Right ventricle myocardium inferior (tissue), 1 donor: ENCODE measurements at regions of chr9 and their contacts with region 1.

Region 1: GRCh38 chr9:3508521-3509291 is 17.1 kb downstream of the RFX3 start:
- DNase-seq: no peak
- ATAC-seq: no peak

Region 2: DNA sequence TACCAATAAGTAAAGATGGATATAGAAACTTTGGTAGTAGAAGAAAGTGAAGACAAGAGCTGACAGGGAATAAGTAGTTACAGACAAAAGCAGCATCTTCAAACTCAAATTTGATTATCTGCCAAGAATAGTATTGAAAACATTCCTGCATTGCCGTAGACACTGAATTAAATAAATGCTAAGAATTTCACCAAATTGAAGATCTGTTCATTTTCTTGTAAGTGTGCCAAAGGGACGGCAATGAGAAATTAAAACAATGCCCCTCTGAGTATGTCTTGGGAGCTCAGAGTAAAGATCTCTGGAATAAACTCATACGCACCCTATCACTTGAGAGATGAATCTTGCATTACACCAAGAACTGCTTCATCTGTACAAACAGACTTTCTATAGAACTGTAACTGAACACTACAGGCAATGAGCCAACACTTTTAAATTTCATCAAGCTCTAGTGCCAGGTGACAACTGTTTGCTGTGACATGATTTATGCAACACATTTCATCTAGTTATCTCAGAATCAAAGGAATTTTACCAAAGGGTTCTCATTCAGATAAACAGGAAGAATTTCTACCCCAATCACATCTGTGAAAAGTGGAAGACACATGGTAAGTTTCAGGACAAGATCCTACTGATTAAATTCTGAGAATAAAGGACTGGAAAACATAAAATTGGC is 49.8 kb before region 1 on chr9:
- intact Hi-C with region 1: loop called (anchors 10 kb)
- DNase-seq: no peak
- ATAC-seq: no peak

Region 3: DNA sequence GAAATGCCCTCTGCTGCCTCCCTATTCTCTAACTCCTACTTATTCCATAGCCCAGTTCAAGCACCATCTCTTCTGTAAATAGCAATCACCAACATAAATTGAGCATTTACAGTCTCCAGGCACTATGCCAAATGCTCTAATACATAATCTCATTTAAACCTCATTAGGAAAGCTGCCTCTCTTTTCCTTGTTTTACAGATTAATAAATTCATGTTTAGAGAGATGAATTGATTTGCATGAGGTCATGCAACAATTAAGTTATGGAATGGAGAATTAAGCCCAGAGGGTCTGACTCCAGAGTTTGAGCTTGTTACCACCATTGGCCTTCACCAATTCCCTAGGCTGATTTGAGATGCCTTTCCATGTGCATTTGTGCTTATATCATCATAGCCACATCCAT is 40.5 kb after region 1 on chr9:
- intact Hi-C with region 1: no loop called
- DNase-seq: no peak
- ATAC-seq: no peak

Region 4: GRCh38 chr9:4020038-4020754 is 511.5 kb after region 1 on chr9:
- intact Hi-C with region 1: no loop called
- DNase-seq: no peak
- ATAC-seq: no peak